ENCODE measurements at regions of chr1 and their contacts with region 1.

Region 1: GRCh38 chr1:104780470-104781078 is 1030.9 kb downstream of the AMY1C start:
- DNase-seq: peak; percentile 64
- ATAC-seq: no peak
- H3K4me3 ChIP-seq: no peak overlapping the region
- H3K27ac ChIP-seq: no peak overlapping the region
- H3K4me1 ChIP-seq: peaks cover 4% of the 10 kb centered on the region; the same call in 1 of the 2 replicates
- H3K27me3 ChIP-seq: no peaks in the 10 kb centered on the region
- CTCF ChIP-seq: peak; percentile 92

Region 2: GRCh38 chr1:104120525-104120924 is 660.0 kb before region 1 on chr1:
- CTCF ChIA-PET with region 1: no interaction called
- POLR2A ChIA-PET with region 1: no interaction called
- intact Hi-C with region 1: loop called (anchors 10 kb)
- DNase-seq: no peak
- ATAC-seq: no peak
- H3K4me3 ChIP-seq: no peak overlapping the region
- H3K27ac ChIP-seq: no peak overlapping the region
- H3K4me1 ChIP-seq: no peaks in the 10 kb centered on the region; the same call in 1 of the 2 replicates
- H3K27me3 ChIP-seq: 0 out of 2 replicates have a peak, but pooled peaks cover 3% of the 10 kb centered on the region
- CTCF ChIP-seq: no peak; the same call in 1 of the 2 replicates

Region 3: GRCh38 chr1:104648269-104648691 is 132.3 kb before region 1 on chr1:
- CTCF ChIA-PET with region 1: no interaction called
- POLR2A ChIA-PET with region 1: no interaction called
- intact Hi-C with region 1: loop called (anchors 5 kb)
- DNase-seq: peak; percentile 44
- ATAC-seq: peak; percentile 31; the same call in 1 of the 2 replicates
- H3K4me3 ChIP-seq: no peak overlapping the region
- H3K27ac ChIP-seq: no peak overlapping the region
- H3K4me1 ChIP-seq: peaks cover 10% of the 10 kb centered on the region
- H3K27me3 ChIP-seq: no peaks in the 10 kb centered on the region
- CTCF ChIP-seq: peak; percentile 88

Region 4: GRCh38 chr1:104953555-104953954 is 173.0 kb after region 1 on chr1:
- CTCF ChIA-PET with region 1: no interaction called
- POLR2A ChIA-PET with region 1: no interaction called
- intact Hi-C with region 1: loop called (anchors 10 kb)
- DNase-seq: peak; percentile 33
- ATAC-seq: peak; percentile 82
- H3K4me3 ChIP-seq: no peak overlapping the region
- H3K27ac ChIP-seq: no peak overlapping the region
- H3K4me1 ChIP-seq: 0 out of 2 replicates have a peak, but pooled peaks cover 7% of the 10 kb centered on the region
- H3K27me3 ChIP-seq: no peaks in the 10 kb centered on the region
- CTCF ChIP-seq: no peak

Region 5: DNA sequence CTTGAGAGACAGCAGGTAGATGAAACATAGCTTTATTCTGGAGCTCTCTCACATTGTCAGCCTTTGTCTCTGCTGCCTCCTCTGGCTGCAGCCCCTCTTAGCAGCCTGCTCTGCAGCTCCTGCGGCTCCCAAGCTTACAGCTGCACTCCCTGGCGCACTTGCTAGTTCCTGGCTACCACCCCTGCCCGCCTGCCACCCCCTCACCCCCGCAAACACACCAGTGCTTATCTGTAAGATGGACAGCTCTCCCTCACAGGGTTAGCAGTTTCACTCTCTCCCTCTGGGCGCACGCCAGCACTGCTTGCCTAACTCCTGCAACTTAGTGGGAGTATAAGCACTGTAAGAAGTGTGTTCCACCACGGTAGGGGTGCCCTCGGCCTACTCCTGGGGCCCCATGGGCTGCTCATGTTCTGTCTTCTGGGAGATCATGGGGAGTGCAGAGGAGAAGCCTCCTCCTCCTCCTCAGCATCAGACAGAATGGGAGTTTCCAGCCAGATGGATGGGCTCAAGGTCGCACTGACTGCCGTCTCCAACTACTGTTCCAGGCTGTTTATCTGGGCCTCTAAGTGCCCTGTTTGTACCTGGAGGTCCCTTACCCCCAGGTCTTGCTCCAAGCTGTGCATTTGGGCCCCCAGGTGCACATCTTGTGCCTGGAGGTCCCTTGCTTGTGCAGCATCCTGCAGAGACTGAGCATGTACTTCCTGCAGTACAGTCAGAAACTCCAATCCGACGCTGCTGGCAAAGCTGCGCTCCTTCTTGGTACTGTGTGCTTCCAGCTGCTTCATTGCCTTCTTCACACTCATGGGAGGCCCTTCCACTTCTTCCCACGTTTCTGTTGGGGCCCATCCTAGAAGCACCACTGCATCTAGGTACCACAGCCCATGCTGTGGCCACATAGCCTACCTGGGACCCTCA is 357.2 kb after region 1 on chr1:
- CTCF ChIA-PET with region 1: interaction called, 5 read pairs
- POLR2A ChIA-PET with region 1: no interaction called
- intact Hi-C with region 1: loop called (anchors 5 kb)
- DNase-seq: peak; percentile 61
- ATAC-seq: peak; percentile 88
- H3K4me3 ChIP-seq: no peak overlapping the region
- H3K27ac ChIP-seq: no peak overlapping the region
- H3K4me1 ChIP-seq: no peaks in the 10 kb centered on the region
- H3K27me3 ChIP-seq: peaks cover 3% of the 10 kb centered on the region; the same call in 1 of the 2 replicates
- CTCF ChIP-seq: peak; percentile 61

Region 6: GRCh38 chr1:105608713-105609112 is 828.1 kb after region 1 on chr1:
- CTCF ChIA-PET with region 1: interaction called, 3 read pairs
- POLR2A ChIA-PET with region 1: no interaction called
- intact Hi-C with region 1: loop called (anchors 1 kb)
- DNase-seq: peak; percentile 41
- ATAC-seq: peak; percentile 63
- H3K4me3 ChIP-seq: no peak overlapping the region
- H3K27ac ChIP-seq: no peak overlapping the region
- H3K4me1 ChIP-seq: no peaks in the 10 kb centered on the region
- H3K27me3 ChIP-seq: no peaks in the 10 kb centered on the region
- CTCF ChIP-seq: peak; percentile 62

Region 7: GRCh38 chr1:105793536-105794146 is 1013.1 kb after region 1 on chr1:
- CTCF ChIA-PET with region 1: no interaction called
- POLR2A ChIA-PET with region 1: no interaction called
- intact Hi-C with region 1: loop called (anchors 5 kb)
- DNase-seq: peak; percentile 72
- ATAC-seq: peak; percentile 70
- H3K4me3 ChIP-seq: no peak overlapping the region
- H3K27ac ChIP-seq: no peak overlapping the region
- H3K4me1 ChIP-seq: no peaks in the 10 kb centered on the region
- H3K27me3 ChIP-seq: no peaks in the 10 kb centered on the region
- CTCF ChIP-seq: peak; percentile 89